HEK293 (cell line): ENCODE measurements at regions of chrX and their contacts with region 1.

Region 1: DNA sequence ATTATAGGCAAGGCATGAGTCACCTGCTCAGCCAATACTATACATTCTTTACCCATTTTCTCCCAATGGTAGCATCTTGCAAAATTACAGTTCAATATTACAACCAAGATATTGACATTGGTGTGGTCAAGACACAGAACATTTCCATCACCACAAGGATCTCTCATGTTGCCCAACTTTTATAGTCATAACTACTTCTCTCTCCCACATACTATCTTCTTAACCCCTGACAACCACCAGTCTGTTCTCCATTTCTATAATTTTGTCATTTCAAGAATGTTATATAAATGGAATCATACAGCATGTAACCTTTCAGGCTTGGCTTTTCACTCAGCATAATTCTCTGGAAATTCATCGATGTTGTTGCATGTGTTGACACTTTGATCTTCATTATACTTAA is 144.9 kb downstream of the ENOX2 start:
- H3K4me3 ChIP-seq: no peak overlapping the region
- H3K27ac ChIP-seq: no peak overlapping the region
- H3K4me1 ChIP-seq: no peaks in the 10 kb centered on the region
- CTCF ChIP-seq: no peak

Region 2: GRCh38 chrX:130741584-130741983 is 16.5 kb before region 1 on chrX:
- CTCF ChIA-PET with region 1: no interaction called
- POLR2A ChIA-PET with region 1: interaction called, 12 read pairs
- H3K4me3 ChIP-seq: no peak overlapping the region
- H3K27ac ChIP-seq: no peak overlapping the region
- H3K4me1 ChIP-seq: no peaks in the 10 kb centered on the region; the same call in 1 of the 2 replicates
- CTCF ChIP-seq: no peak